ENCODE measurements at regions of chr9 and their contacts with region 1.

Region 1: DNA sequence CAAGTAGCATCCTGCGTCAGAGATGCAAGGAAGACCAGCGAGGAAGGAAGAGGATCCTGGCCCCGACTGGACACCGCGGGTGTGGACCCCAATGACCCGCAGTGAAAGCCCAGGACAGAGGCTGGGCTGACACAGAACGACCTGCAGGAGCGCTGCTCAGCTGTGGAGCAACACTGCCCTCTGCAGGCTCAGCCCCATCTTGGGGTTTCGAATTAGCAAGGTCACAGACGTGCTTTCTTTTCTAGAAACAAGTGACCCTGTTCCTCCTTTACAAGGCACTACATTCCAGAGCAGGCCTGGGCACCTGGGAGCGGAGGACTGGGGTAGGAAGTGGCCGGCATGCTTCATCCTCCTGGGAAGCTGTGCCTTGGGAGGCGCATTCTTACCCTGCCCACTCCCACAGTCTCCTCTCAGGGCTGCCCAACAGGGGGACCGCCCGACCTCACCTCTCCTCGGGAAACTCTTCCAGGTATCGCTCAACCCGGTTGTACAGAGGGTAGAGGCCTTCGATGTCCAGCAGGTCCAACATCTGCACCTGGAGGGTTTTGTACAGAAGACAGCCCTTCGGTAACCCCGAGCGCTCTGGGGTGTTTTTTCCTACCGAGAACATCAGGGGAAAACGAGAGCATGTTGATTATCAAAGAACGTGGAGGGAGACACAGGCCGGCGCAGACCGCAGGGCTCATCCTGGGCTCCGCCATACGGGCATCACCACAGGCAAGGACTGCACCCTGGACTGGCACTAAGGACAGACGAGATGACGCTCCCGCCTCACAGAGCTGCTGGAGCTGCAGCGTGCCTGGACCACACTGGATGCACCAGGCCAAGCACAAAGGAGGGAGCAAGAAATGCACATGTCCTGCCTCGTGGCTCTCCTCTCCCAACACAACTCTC is 35.0 kb downstream of the IPPK start:
- DNase-seq: peak; percentile 79 to 85
- ATAC-seq: peak; percentile 71 to 94 (median 88)
- H3K4me3 ChIP-seq: peak overlapping the region in 1 of 10 donors; percentile 13
- H3K27ac ChIP-seq: peak overlapping the region in 8 of 10 donors; percentile 18 to 59 (median 43)
- H3K4me1 ChIP-seq: peaks cover 0 to 12% (median 7%) of the 10 kb centered on the region in 9 donors
- H3K27me3 ChIP-seq: no peaks in the 10 kb centered on the region
- CTCF ChIP-seq: peak; percentile 87 to 97 (median 93)

Region 2: DNA sequence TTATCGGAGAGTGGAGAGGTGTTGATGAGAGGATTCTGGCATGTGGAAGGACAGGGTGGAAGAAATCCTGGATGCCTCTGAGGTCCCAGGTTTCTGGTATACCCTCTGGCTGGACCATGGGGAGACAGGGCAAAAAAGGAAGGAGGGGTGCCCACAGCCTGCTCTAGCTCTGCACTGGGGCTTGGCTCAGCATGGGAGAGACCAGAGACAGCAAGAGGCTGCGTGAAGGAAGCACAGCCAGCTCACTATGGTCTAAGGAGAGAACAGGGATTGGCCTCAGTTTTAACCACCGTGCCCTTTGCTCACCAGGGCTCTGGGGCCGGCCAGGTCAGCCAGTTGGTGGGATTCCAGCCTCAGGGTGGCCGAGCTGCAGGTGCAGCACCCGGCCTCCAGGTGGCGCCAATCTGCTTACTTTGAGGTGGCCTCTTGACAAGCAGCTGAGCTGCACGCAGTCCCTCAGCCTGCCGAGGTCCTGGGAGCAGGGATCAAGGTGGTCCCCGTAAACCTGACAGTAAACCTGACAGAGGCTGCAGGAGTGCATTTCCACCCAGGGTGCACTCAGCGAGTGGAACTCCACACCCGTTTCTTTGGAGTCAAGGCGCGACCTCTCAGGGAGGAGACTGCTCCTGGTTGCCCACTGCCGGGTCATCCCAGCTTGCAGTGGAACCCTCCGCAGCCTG is 494.7 kb before region 1 on chr9:
- intact Hi-C with region 1: loop called in 8 of 10 experiments (anchors 5 to 10 kb)
- DNase-seq: peak; percentile 66 to 78
- ATAC-seq: peak; percentile 57 to 85 (median 65)
- H3K4me3 ChIP-seq: peak overlapping the region in 9 of 10 donors; percentile 4 to 53 (median 48)
- H3K27ac ChIP-seq: no peak overlapping the region
- H3K4me1 ChIP-seq: peaks cover 0 to 16% (median 11%) of the 10 kb centered on the region in 9 donors
- H3K27me3 ChIP-seq: peaks cover 0 to 28% (median 14%) of the 10 kb centered on the region in 7 donors
- CTCF ChIP-seq: peak; percentile 74 to 96 (median 90)

Region 3: GRCh38 chr9:92342825-92343488 is 292.0 kb before region 1 on chr9:
- intact Hi-C with region 1: loop called in 8 of 10 experiments (anchors 1 to 10 kb)
- DNase-seq: no peak
- ATAC-seq: no peak
- H3K4me3 ChIP-seq: no peak overlapping the region
- H3K27ac ChIP-seq: no peak overlapping the region
- H3K4me1 ChIP-seq: no peaks in the 10 kb centered on the region
- H3K27me3 ChIP-seq: no peaks in the 10 kb centered on the region
- CTCF ChIP-seq: peak in 6 of 9 donors; percentile 32 to 51 (median 40)

Region 4: GRCh38 chr9:92501671-92502393 is 133.1 kb before region 1 on chr9:
- intact Hi-C with region 1: loop called in 3 of 10 experiments (anchors 5 to 10 kb)
- DNase-seq: no peak
- ATAC-seq: peak; percentile 55 to 85 (median 76)
- H3K4me3 ChIP-seq: no peak overlapping the region
- H3K27ac ChIP-seq: peak overlapping the region in 4 of 10 donors; percentile 1 to 67 (median 16)
- H3K4me1 ChIP-seq: peaks cover 2 to 51% (median 20%) of the 10 kb centered on the region in 9 donors
- H3K27me3 ChIP-seq: no peaks in the 10 kb centered on the region
- CTCF ChIP-seq: peak in 7 of 9 donors; percentile 42 to 56 (median 45)

Measured in heart right ventricle (tissue), 16 donors.